Calu3 (cell line): ENCODE measurements at regions of chr14 and their contacts with region 1.

Region 1: GRCh38 chr14:87615822-87616679 is 376.9 kb downstream of the GALC start:
- DNase-seq: peak; percentile 77
- H3K4me3 Mint-ChIP-seq: no peak overlapping the region
- H3K27ac Mint-ChIP-seq: no peak overlapping the region
- H3K4me1 Mint-ChIP-seq: peaks cover 13% of the 10 kb centered on the region
- H3K27me3 Mint-ChIP-seq: no peaks in the 10 kb centered on the region
- CTCF ChIP-seq: peak; percentile 77

Region 2: GRCh38 chr14:87113286-87113685 is 502.8 kb before region 1 on chr14:
- CTCF ChIA-PET with region 1: no interaction called
- intact Hi-C with region 1: loop called (anchors 2 kb)
- DNase-seq: no peak
- H3K4me3 Mint-ChIP-seq: no peak overlapping the region
- H3K27ac Mint-ChIP-seq: no peak overlapping the region
- H3K4me1 Mint-ChIP-seq: no peaks in the 10 kb centered on the region
- H3K27me3 Mint-ChIP-seq: no peaks in the 10 kb centered on the region
- CTCF ChIP-seq: no peak

Region 3: GRCh38 chr14:87334997-87335685 is 280.9 kb before region 1 on chr14:
- CTCF ChIA-PET with region 1: no interaction called
- intact Hi-C with region 1: loop called (anchors 10 kb)
- DNase-seq: no peak
- H3K4me3 Mint-ChIP-seq: no peak overlapping the region
- H3K27ac Mint-ChIP-seq: no peak overlapping the region
- H3K4me1 Mint-ChIP-seq: no peaks in the 10 kb centered on the region
- H3K27me3 Mint-ChIP-seq: no peaks in the 10 kb centered on the region
- CTCF ChIP-seq: no peak

Region 4: DNA sequence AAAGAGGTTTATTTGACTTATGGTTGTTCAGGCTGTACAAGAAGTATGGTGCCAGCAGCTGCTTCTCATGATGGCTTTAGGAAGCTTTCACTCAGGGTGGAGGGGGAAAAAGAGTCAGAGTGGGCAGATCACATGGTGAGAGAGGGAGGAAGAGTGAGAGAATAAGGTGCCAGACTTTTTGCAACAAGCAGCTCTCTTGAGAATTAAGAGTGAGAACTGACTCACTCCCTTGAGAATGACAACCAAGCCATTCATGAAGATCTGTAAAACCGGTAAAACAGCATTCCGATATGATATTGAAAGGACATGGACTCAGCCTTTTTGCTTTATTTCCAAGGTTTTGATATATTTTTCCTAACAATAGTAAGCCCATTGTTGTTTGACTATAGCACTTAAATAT is 124.2 kb before region 1 on chr14:
- CTCF ChIA-PET with region 1: no interaction called
- intact Hi-C with region 1: loop called (anchors 10 kb)
- DNase-seq: peak; percentile 54
- H3K4me3 Mint-ChIP-seq: peak overlapping the region; percentile 55
- H3K27ac Mint-ChIP-seq: peak overlapping the region; percentile 93
- H3K4me1 Mint-ChIP-seq: peaks cover 36% of the 10 kb centered on the region
- H3K27me3 Mint-ChIP-seq: no peaks in the 10 kb centered on the region
- CTCF ChIP-seq: no peak